ENCODE measurements at regions of chr7 and their contacts with region 1.

Region 1: GRCh38 chr7:151017953-151018420 is 6.3 kb downstream of the ATG9B start:
- DNase-seq: peak; percentile 83
- ATAC-seq: peak; percentile 62
- H3K4me3 Mint-ChIP-seq: peak overlapping the region; percentile 69
- H3K27ac Mint-ChIP-seq: peak overlapping the region; percentile 65
- H3K4me1 Mint-ChIP-seq: peaks cover 59% of the 10 kb centered on the region
- H3K27me3 Mint-ChIP-seq: peaks cover 28% of the 10 kb centered on the region

Region 2: GRCh38 chr7:151110941-151111645 is 93.1 kb after region 1 on chr7:
- CTCF ChIA-PET with region 1: interaction called, 11 read pairs
- POLR2A ChIA-PET with region 1: no interaction called
- DNase-seq: peak; percentile 83
- ATAC-seq: peak; percentile 84
- H3K4me3 Mint-ChIP-seq: no peak overlapping the region
- H3K27ac Mint-ChIP-seq: no peak overlapping the region
- H3K4me1 Mint-ChIP-seq: peaks cover 8% of the 10 kb centered on the region
- H3K27me3 Mint-ChIP-seq: peaks cover 20% of the 10 kb centered on the region

Region 3: GRCh38 chr7:151261529-151261928 is 243.5 kb after region 1 on chr7:
- CTCF ChIA-PET with region 1: no interaction called
- POLR2A ChIA-PET with region 1: no interaction called
- DNase-seq: no peak
- ATAC-seq: no peak
- H3K4me3 Mint-ChIP-seq: no peak overlapping the region
- H3K27ac Mint-ChIP-seq: no peak overlapping the region
- H3K4me1 Mint-ChIP-seq: no peaks in the 10 kb centered on the region
- H3K27me3 Mint-ChIP-seq: peaks cover 5% of the 10 kb centered on the region

Region 4: DNA sequence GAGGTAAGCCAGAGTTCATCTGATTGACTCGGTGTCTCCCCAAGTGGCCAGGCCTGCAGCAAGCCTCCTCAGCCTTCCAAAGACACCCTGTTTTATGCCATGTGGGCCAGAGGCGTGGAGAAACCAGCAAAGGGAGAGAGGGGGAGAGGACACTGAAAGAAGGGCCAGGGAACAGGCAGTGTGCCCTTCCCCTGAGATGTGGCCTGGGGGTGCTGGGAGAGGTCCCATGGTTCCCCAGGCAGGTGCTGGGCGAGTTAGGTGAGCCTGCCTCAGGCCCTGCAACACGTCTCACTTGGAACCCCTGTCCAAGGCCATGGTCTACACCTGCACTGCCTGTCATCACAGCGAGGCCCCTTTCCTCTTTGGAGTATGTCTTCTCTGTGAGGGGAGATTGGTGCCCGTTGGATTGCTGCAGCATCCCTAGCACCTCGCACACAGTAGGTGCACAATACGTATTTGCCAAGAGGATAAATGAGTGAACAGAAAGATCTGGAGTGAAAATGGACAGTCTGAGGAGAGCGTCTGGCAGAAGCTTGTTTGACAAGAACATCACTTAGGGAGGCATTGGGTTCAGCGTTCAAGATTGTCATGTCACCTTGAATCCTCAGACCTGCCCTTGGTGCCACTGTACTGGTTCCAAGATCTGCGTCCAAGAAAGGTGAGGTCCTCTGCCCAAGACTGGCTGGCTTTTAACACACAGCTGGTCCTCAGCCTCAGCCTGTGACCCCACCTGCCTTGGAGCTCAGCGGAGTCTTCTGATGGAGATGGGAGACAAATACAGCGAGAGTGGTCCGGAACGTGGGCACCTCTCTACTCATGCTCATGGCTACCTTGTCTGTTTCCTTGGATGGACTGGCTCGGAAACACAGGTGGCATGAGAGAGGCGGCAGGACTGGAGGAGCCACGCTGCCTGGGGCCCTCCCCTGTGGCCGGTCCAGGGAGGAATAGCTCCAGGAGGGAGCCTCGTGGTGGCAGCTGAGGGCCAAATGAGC is 283.8 kb after region 1 on chr7:
- CTCF ChIA-PET with region 1: no interaction called
- POLR2A ChIA-PET with region 1: no interaction called
- DNase-seq: no peak
- ATAC-seq: no peak
- H3K4me3 Mint-ChIP-seq: no peak overlapping the region
- H3K27ac Mint-ChIP-seq: no peak overlapping the region
- H3K4me1 Mint-ChIP-seq: peaks cover 18% of the 10 kb centered on the region
- H3K27me3 Mint-ChIP-seq: peaks cover 29% of the 10 kb centered on the region

Measured in activated CD8-positive, alpha-beta T cell treated with anti-CD3 and anti-CD28 coated beads, Interleukin-2, amount 10 ng/mL, durations not matched to agents 7 days and 5 days (primary cell).